ENCODE measurements at regions of chr2 and their contacts with region 1.

Region 1: GRCh38 chr2:211035548-211036185 is 479.3 kb downstream of the CPS1 start:
- DNase-seq: no peak
- ATAC-seq: no peak
- H3K4me3 ChIP-seq: no peak overlapping the region
- H3K4me3 Mint-ChIP-seq: no peak overlapping the region
- H3K27ac ChIP-seq: no peak overlapping the region
- H3K27ac Mint-ChIP-seq: no peak overlapping the region
- H3K4me1 ChIP-seq: no peaks in the 10 kb centered on the region
- H3K4me1 Mint-ChIP-seq: no peaks in the 10 kb centered on the region
- H3K27me3 ChIP-seq: no peaks in the 10 kb centered on the region
- H3K27me3 Mint-ChIP-seq: no peaks in the 10 kb centered on the region

Region 2: DNA sequence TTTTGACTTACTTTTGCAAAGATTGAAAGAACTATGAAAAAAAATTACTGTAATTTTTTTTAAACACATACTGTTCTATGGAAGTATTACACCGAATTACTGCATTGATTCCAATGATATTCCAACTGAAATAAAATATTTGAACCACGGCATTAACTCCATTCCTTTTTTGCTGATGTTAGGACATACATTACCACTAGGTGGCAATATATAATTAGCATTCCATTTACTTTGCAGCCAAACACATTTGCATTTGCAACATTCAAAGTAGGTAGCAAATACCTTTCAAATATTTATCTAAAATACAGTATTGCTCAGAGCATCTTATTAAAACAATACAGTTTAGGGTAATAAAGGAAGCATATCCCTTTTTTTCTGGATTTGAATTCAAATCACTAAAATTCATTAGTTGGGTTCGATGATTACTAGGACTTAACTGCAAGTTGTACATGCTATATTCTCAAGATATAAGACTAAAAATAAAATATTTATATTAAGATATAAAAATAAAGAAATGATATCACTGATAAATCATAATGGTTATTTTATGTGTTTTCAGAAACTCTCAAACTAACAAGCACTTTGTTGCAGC is 590.5 kb before region 1 on chr2:
- CTCF ChIA-PET with region 1: no interaction called
- POLR2A ChIA-PET with region 1: no interaction called
- intact Hi-C with region 1: loop called in 1 of 2 experiments (anchors 10 kb)
- DNase-seq: peak in 5 of 9 donors; percentile 5 to 26 (median 20)
- ATAC-seq: peak; percentile 52
- H3K4me3 ChIP-seq: no peak overlapping the region
- H3K4me3 Mint-ChIP-seq: no peak overlapping the region
- H3K27ac ChIP-seq: no peak overlapping the region
- H3K27ac Mint-ChIP-seq: no peak overlapping the region
- H3K4me1 ChIP-seq: no peaks in the 10 kb centered on the region
- H3K4me1 Mint-ChIP-seq: peaks cover 10 to 34% (median 28%) of the 10 kb centered on the region in 7 donors
- H3K27me3 ChIP-seq: no peaks in the 10 kb centered on the region
- H3K27me3 Mint-ChIP-seq: no peaks in the 10 kb centered on the region

Region 3: GRCh38 chr2:210577263-210578071 is 458.2 kb before region 1 on chr2:
- CTCF ChIA-PET with region 1: no interaction called
- POLR2A ChIA-PET with region 1: no interaction called
- intact Hi-C with region 1: loop called in 1 of 2 experiments (anchors 1 kb)
- DNase-seq: peak in 5 of 9 donors; percentile 6 to 31 (median 19)
- ATAC-seq: peak; percentile 48
- H3K4me3 ChIP-seq: no peak overlapping the region
- H3K4me3 Mint-ChIP-seq: no peak overlapping the region
- H3K27ac ChIP-seq: no peak overlapping the region
- H3K27ac Mint-ChIP-seq: no peak overlapping the region
- H3K4me1 ChIP-seq: no peaks in the 10 kb centered on the region
- H3K4me1 Mint-ChIP-seq: peaks cover 0 to 5% (median 0%) of the 10 kb centered on the region in 7 donors
- H3K27me3 ChIP-seq: no peaks in the 10 kb centered on the region
- H3K27me3 Mint-ChIP-seq: peaks cover 0 to 3% (median 0%) of the 10 kb centered on the region in 5 donors

Region 4: GRCh38 chr2:210617732-210618330 is 417.8 kb before region 1 on chr2:
- CTCF ChIA-PET with region 1: no interaction called
- POLR2A ChIA-PET with region 1: no interaction called
- intact Hi-C with region 1: loop called in 1 of 2 experiments (anchors 1 kb)
- DNase-seq: no peak
- ATAC-seq: no peak
- H3K4me3 ChIP-seq: no peak overlapping the region
- H3K4me3 Mint-ChIP-seq: no peak overlapping the region
- H3K27ac ChIP-seq: no peak overlapping the region
- H3K27ac Mint-ChIP-seq: no peak overlapping the region
- H3K4me1 ChIP-seq: no peaks in the 10 kb centered on the region
- H3K4me1 Mint-ChIP-seq: no peaks in the 10 kb centered on the region
- H3K27me3 ChIP-seq: no peaks in the 10 kb centered on the region
- H3K27me3 Mint-ChIP-seq: no peaks in the 10 kb centered on the region

Region 5: DNA sequence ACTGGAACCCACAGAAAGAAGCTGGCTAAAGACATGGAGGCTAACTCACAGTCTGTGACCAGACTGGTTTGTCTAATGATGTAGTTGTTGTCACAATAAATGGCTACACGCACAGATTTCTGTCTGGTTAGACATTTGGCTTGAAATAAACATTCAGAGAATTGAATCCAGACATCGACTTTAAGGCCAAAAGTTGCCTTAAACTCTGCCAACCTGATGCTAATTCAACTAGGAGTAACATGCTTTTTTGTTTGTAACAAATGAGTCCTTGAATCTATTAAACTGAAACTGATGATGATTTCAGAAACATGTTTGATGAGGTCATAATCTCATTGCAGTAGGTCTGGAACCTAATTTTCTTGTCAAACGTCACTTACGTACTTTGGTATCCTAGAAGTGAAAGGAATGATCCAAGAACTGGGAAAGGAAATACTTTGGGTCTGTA is 1379.1 kb after region 1 on chr2:
- CTCF ChIA-PET with region 1: no interaction called
- POLR2A ChIA-PET with region 1: no interaction called
- intact Hi-C with region 1: no loop called
- DNase-seq: no peak
- ATAC-seq: no peak
- H3K4me3 ChIP-seq: no peak overlapping the region
- H3K4me3 Mint-ChIP-seq: no peak overlapping the region
- H3K27ac ChIP-seq: no peak overlapping the region
- H3K27ac Mint-ChIP-seq: no peak overlapping the region
- H3K4me1 ChIP-seq: no peaks in the 10 kb centered on the region
- H3K4me1 Mint-ChIP-seq: no peaks in the 10 kb centered on the region
- H3K27me3 ChIP-seq: no peaks in the 10 kb centered on the region
- H3K27me3 Mint-ChIP-seq: no peaks in the 10 kb centered on the region